Activated CD4-positive, alpha-beta memory T cell treated with anti-CD3 and anti-CD28 coated beads for 36 hours (primary cell): ENCODE measurements at regions of chr6 and their contacts with region 1.

Region 1: DNA sequence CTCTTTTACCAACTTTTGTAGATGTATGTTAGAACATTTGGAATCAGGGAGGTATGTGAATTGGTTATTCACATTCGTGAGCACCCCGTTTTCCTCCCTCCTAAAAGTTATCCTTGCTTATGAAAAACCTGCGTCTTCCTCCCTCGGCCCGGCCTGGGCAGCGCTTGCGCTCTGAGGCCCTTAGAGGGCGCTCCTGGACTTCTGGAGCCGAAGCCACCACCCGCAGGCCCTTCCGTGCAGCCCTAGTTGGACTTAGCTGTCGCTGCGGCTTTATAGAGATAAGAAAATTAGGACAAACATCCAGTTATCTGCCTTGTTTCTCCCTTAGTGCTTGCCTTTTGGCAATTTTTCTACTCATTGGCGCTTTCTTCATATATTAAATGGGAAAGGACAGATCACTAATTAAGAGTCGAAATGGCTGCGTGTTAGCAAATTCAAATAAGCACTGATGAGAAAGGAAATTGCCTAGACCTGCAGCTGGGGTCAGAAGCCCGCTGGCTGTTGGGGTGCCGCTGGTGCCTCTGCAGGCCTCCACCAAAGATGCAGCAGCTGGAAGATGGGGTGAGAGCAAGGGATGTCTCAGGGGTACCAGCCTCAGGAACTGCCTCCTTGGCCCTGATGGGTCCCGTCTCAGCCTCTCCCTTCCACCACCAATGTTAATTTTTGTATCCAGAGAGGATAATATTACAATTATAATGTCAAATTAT is 5.2 kb downstream of the FNDC1 start:
- DNase-seq: peak; percentile 82
- H3K4me3 Mint-ChIP-seq: no peak overlapping the region
- H3K27ac Mint-ChIP-seq: no peak overlapping the region
- H3K4me1 Mint-ChIP-seq: peaks cover 10% of the 10 kb centered on the region
- H3K27me3 Mint-ChIP-seq: peaks cover 46% of the 10 kb centered on the region

Region 2: DNA sequence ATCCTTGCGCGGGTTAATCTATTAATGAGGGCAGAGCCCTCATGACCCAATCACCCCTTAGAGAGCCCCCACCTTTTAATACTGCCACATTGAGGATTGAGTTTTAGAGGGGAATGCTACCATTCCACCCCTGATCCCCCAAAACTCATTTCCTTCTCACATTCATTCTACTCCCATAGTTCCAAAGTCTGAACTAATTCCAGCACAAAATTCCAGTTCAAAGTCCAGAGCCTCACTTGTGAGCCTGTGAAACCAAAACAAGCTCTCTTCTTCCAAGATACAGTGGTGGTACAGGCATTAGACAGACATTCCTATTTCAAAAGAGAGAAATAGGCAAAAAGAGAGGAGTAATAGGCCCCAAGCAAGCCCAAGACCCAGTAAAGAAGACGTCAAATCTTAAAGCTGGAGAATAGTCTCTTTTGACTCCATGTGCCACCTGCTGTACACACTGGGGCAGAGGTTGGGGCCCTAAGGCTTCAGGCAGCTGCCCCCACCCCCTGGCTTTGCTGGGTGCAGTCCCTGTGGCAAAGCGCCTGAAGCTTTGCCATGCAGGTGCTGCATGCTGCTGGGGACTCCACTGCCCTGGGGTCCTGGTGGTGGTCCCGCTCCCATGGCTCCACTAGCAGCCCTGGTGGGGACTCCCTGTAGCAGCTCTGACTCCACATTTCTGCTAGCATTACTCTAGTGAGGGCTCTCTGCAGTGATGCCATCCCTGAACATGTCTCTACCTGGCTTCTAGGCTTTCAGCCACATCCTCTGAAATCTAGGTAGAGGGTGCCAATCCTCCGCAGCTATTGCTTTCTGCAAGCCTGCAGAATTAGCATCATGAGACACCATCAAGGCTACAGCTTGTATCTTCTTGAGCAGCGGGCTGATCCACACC is 215.7 kb before region 1 on chr6:
- CTCF ChIA-PET with region 1: no interaction called
- POLR2A ChIA-PET with region 1: no interaction called
- intact Hi-C with region 1: no loop called
- DNase-seq: peak; percentile 37
- H3K4me3 Mint-ChIP-seq: no peak overlapping the region
- H3K27ac Mint-ChIP-seq: no peak overlapping the region
- H3K4me1 Mint-ChIP-seq: peaks cover 5% of the 10 kb centered on the region
- H3K27me3 Mint-ChIP-seq: no peaks in the 10 kb centered on the region

Region 3: GRCh38 chr6:159184559-159184958 is 10.1 kb after region 1 on chr6:
- CTCF ChIA-PET with region 1: interaction called, 20 read pairs
- POLR2A ChIA-PET with region 1: no interaction called
- intact Hi-C with region 1: no loop called
- DNase-seq: no peak
- H3K4me3 Mint-ChIP-seq: no peak overlapping the region
- H3K27ac Mint-ChIP-seq: no peak overlapping the region
- H3K4me1 Mint-ChIP-seq: peaks cover 16% of the 10 kb centered on the region
- H3K27me3 Mint-ChIP-seq: peaks cover 3% of the 10 kb centered on the region

Region 4: DNA sequence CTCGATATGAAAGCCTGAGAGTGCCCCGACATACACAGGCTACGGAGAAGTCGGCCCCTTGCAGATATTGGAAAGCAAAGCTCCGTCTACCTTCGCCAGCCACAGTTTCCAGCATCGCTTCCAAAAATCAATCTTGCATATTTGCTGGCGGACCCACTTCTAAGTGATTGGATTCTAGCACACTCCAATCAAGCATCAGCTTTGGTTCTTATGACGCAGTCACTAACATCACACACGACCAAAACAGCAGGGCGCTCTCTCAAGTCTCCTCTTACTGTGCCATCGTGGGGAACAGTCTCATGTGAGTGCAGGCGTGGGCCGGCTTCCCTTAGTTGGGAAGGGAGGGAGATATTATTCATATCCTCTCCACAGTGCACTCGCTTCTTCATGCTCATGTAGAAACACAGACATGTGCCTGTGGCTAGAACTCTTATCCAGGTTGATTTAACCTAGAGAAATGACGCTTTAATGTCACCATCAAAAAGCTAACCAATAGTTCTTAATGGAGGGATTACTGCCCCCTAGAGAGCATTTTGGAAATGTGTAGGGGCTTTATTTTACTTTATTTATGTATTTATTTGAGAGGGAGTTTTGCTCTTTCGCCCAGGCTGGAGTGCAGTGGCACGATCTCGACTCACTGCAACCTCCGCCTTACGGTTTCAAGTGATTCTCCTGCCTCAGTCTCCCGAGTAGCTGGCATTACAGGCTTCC is 288.9 kb after region 1 on chr6:
- CTCF ChIA-PET with region 1: interaction called, 5 read pairs
- POLR2A ChIA-PET with region 1: no interaction called
- intact Hi-C with region 1: loop called (anchors 1 kb)
- DNase-seq: no peak
- H3K4me3 Mint-ChIP-seq: no peak overlapping the region
- H3K27ac Mint-ChIP-seq: no peak overlapping the region
- H3K4me1 Mint-ChIP-seq: no peaks in the 10 kb centered on the region
- H3K27me3 Mint-ChIP-seq: peaks cover 12% of the 10 kb centered on the region

Region 5: GRCh38 chr6:159608961-159609651 is 434.7 kb after region 1 on chr6:
- CTCF ChIA-PET with region 1: interaction called, 4 read pairs
- POLR2A ChIA-PET with region 1: no interaction called
- intact Hi-C with region 1: loop called (anchors 5 kb)
- DNase-seq: peak; percentile 41
- H3K4me3 Mint-ChIP-seq: no peak overlapping the region
- H3K27ac Mint-ChIP-seq: no peak overlapping the region
- H3K4me1 Mint-ChIP-seq: no peaks in the 10 kb centered on the region
- H3K27me3 Mint-ChIP-seq: peaks cover 1% of the 10 kb centered on the region

Region 6: DNA sequence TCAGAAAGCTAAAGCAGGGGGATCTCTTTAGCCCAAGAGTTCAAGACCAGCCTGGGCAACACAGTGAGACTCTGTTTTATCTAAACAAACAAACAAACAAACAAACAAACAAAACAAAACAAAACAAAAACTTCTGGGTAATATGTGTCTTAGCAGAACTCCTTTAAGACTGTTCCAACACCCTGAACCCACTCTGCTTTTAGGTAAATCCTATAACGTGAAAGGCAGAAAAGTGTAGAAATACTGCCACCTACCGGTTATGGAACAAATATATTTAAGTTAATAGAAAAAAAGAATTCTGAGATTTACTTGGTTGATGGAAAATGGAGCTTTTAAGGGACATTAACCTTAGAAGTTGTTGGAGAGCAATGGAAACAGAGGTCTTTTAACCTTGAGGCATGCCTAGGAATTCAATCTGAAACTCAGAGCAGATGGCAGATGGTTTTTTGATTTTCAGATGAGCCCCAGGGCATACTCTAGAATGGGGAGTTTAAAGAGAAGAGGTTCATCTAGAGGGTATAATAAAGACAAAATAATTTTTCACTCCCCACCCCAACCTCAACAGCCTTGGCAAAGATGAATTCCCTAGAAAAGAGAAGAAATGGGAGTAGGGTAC is 480.2 kb after region 1 on chr6:
- CTCF ChIA-PET with region 1: interaction called, 130 read pairs
- POLR2A ChIA-PET with region 1: no interaction called
- intact Hi-C with region 1: loop called (anchors 1 kb)
- DNase-seq: no peak
- H3K4me3 Mint-ChIP-seq: no peak overlapping the region
- H3K27ac Mint-ChIP-seq: no peak overlapping the region
- H3K4me1 Mint-ChIP-seq: no peaks in the 10 kb centered on the region
- H3K27me3 Mint-ChIP-seq: no peaks in the 10 kb centered on the region